ENCODE measurements at regions of chr1 and their contacts with region 1.

Region 1: DNA sequence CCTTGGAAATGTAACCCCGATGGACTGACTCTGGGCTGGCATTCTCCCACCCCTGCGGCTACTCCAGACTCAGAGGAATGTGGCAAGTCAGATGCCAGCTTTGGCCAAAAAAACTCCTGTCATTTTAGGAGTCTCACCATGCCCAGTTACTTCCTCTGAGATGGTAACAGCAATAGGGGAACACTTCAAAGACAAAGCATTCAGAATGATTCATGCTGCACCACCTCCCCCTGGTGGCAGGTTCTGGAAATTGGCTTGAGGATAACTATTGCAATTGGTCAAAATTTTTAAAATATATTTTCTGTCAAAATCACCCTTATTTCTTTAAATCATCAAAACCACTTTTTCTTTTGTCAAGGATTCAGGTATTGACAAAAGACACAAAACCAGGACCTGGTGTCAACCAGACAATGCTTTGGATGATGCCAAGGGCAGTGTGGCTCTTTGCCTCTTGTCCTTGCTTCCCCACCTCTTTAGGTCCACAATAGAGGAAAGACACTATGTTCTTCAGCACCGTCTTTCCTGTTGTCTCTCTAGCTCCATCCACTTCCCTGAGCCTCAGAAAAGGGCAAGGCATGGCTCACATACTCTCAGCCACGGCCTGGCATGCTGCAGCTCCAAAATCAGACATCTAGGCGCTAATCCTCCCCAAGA is 9.9 kb upstream of the CDCA8 start:
- DNase-seq: peak; percentile 46 to 71
- ATAC-seq: peak in 5 of 8 donors; percentile 56 to 78 (median 64)
- H3K4me3 ChIP-seq: no peak overlapping the region
- H3K27ac ChIP-seq: no peak overlapping the region
- H3K4me1 ChIP-seq: peaks cover 0 to 3% (median 0%) of the 10 kb centered on the region in 9 donors
- H3K27me3 ChIP-seq: no peaks in the 10 kb centered on the region
- CTCF ChIP-seq: peak; percentile 74 to 90 (median 87)

Region 2: DNA sequence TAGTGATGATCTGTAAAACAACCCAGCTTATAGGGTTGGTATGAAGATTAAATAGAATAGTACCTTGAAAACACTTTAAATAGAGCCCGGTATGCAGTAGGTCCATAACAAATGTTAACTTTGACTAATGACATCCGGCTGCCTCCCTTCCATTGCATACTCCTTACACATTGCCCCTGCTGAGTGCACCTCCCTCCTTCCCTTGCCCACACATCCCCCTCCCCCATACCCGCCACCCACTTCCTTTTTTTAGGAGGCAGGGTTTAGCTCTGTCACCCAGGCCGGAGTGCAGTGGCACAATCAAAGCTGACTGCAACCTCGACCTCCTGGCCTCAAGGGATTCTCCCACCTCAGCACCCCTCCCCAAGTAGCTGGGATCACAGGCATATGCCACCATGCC is 232.5 kb before region 1 on chr1:
- intact Hi-C with region 1: loop called (anchors 2 to 10 kb)
- DNase-seq: no peak
- ATAC-seq: no peak
- H3K4me3 ChIP-seq: no peak overlapping the region
- H3K27ac ChIP-seq: no peak overlapping the region
- H3K4me1 ChIP-seq: peaks cover 0 to 9% (median 0%) of the 10 kb centered on the region in 9 donors
- H3K27me3 ChIP-seq: peaks cover 0 to 61% (median 31%) of the 10 kb centered on the region in 7 donors
- CTCF ChIP-seq: no peak

Region 3: DNA sequence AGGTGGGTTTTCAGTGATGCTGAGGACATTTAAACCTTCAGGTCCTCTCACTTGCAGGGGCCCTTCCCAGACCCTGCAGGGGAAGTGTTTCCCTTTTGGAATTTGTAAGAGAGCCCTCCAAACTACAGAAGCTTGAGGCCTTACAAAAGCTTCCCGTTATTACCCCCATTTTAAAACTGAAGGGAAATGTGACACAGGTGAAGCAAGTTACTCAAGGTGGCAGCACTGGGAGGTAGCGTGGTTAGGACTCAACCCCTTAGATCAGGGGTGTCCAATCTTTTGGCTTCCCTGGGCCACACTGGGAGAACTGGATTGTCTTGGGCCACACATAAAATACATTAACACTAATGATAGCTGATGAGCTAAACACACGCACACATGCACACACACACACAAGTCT is 223.9 kb before region 1 on chr1:
- intact Hi-C with region 1: loop called (anchors 2 to 10 kb)
- DNase-seq: no peak
- ATAC-seq: no peak
- H3K4me3 ChIP-seq: no peak overlapping the region
- H3K27ac ChIP-seq: no peak overlapping the region
- H3K4me1 ChIP-seq: peaks cover 0 to 10% (median 0%) of the 10 kb centered on the region in 9 donors
- H3K27me3 ChIP-seq: no peaks in the 10 kb centered on the region
- CTCF ChIP-seq: no peak

Region 4: GRCh38 chr1:37602750-37603694 is 79.4 kb before region 1 on chr1:
- intact Hi-C with region 1: loop called in 9 of 10 experiments (anchors 2 to 5 kb)
- DNase-seq: peak in 1 of 2 donors; percentile 7
- ATAC-seq: peak in 3 of 8 donors; percentile 44 to 56 (median 56)
- H3K4me3 ChIP-seq: no peak overlapping the region
- H3K27ac ChIP-seq: no peak overlapping the region
- H3K4me1 ChIP-seq: peaks cover 0 to 7% (median 0%) of the 10 kb centered on the region in 9 donors
- H3K27me3 ChIP-seq: peaks cover 0 to 50% (median 13%) of the 10 kb centered on the region in 7 donors
- CTCF ChIP-seq: peak in 8 of 9 donors; percentile 16 to 71 (median 62)

Region 5: DNA sequence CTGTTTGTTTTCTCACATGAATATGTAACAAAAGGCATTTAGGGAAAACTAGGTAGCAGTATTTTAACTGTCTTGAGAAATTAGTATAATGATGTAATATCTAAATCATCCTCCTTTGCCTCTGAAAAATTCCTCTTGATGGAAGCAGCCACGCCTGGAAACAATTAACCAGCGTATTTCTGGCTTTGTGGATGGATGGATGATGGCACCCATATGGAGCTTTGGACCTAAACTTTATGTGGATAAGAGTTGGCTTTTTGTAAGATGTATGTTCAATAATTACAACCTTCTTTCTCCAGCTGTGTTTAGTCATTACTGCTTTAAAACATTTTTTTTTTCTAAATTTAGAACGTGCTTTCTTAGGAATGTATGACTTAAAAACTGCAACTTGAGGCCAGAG is 22.5 kb after region 1 on chr1:
- intact Hi-C with region 1: no loop called
- DNase-seq: no peak
- ATAC-seq: no peak
- H3K4me3 ChIP-seq: no peak overlapping the region
- H3K27ac ChIP-seq: no peak overlapping the region
- H3K4me1 ChIP-seq: no peaks in the 10 kb centered on the region
- H3K27me3 ChIP-seq: no peaks in the 10 kb centered on the region
- CTCF ChIP-seq: no peak

Region 6: GRCh38 chr1:37782491-37782890 is 100.0 kb after region 1 on chr1:
- intact Hi-C with region 1: no loop called
- DNase-seq: no peak
- ATAC-seq: no peak
- H3K4me3 ChIP-seq: no peak overlapping the region
- H3K27ac ChIP-seq: no peak overlapping the region
- H3K4me1 ChIP-seq: no peaks in the 10 kb centered on the region
- H3K27me3 ChIP-seq: peaks cover 0 to 41% (median 26%) of the 10 kb centered on the region in 7 donors
- CTCF ChIP-seq: no peak

Region 7: DNA sequence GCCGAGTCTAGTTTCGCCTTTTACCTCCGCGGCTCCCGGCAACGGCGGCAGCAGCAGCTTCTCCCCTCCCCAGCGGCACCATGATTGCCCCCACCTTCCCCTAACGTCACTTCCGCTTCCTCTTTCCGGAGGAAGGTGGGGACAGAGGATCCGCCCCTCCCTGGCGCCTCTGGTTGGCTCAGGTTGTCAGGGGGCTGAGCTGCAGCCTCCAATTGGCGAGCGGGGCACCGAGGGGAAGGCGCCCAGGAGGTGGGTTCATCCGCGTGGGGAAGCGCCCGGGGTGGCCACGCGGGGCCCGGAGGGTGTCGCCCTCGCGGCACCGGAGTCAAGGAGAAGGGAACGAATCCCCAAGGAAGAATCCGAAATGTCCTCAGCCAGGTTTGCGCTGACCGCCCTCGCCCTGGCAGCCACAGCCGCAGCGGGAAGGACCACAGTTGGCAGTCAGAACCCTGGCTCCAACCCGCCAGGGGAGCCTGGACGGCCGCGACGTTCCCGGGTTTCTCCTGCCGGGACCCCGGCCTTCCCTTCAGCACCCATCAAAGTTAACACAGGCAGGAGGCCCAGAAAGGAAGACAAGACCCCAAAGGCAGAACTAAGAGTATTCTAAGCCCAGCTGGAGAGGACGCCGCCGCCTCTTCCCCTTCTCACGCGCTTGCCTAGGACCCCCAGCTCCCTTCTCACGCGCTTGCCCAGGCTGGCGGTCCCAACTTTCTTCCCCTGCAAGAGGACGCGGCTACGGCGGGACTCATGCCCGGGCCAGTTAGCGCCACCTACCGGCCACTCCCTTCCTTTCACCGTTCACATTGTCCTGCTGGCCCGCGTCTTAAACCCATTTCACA is 177.3 kb after region 1 on chr1 and contains the start of gene MTF1:
- intact Hi-C with region 1: no loop called
- DNase-seq: peak; percentile 97 to 98
- ATAC-seq: peak; percentile 99 to 100 (median 99)
- H3K4me3 ChIP-seq: peak within 1 kb of the TSS; percentile 72 to 97 (median 86)
- H3K27ac ChIP-seq: peak within 1 kb of the TSS; percentile 75 to 98 (median 94)
- H3K4me1 ChIP-seq: peaks cover 0 to 51% (median 42%) of the 10 kb centered on the region in 9 donors
- H3K27me3 ChIP-seq: no peaks in the 10 kb centered on the region
- CTCF ChIP-seq: peak; percentile 89 to 96 (median 93)
- total RNA-seq, gene MTF1: 10.0 to 17.1 (median 11.0) TPM

Region 8: DNA sequence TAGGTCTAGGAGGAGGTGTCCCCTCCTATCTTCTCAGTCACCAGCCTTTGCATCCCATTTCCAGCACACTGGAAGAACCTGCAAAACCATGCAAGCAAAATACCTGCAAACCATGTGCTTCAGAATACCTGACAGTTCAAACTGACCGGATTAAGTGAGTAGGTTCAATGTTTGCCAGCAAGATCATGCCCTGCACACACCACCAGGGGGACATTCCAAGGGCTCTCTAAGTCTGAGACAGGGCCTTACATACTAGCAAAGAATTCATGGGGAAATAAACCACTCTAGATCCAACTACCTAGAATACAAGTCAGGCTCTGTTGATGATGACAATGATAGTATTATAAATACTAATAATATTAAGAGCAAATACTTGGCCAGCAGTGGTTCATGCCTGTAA is 236.8 kb after region 1 on chr1:
- intact Hi-C with region 1: no loop called
- DNase-seq: no peak
- ATAC-seq: no peak
- H3K4me3 ChIP-seq: no peak overlapping the region
- H3K27ac ChIP-seq: no peak overlapping the region
- H3K4me1 ChIP-seq: peaks cover 0 to 59% (median 23%) of the 10 kb centered on the region in 9 donors
- H3K27me3 ChIP-seq: no peaks in the 10 kb centered on the region
- CTCF ChIP-seq: peak in 4 of 9 donors; percentile 8 to 33 (median 18)